Right ventricle myocardium superior (tissue), 1 donor: ENCODE measurements at regions of chr7 and their contacts with region 1.

Region 1: GRCh38 chr7:44750921-44751571 is 2.4 kb downstream of the ZMIZ2 start:
- DNase-seq: no peak
- ATAC-seq: peak; percentile 4

Region 2: GRCh38 chr7:44606450-44607254 is 144.4 kb before region 1 on chr7 and contains the start of gene OGDH:
- intact Hi-C with region 1: loop called (anchors 10 kb)
- DNase-seq: peak; percentile 100
- ATAC-seq: peak; percentile 97
- total RNA-seq, gene OGDH: 664 TPM

Region 3: GRCh38 chr7:44791278-44792219 is 40.5 kb after region 1 on chr7:
- intact Hi-C with region 1: loop called (anchors 5 kb)
- DNase-seq: no peak
- ATAC-seq: no peak